Activated CD4-positive, alpha-beta T cell treated with anti-CD3 and anti-CD28 coated beads for 36 hours (primary cell): ENCODE measurements at regions of chr19 and their contacts with region 1.

Region 1: DNA sequence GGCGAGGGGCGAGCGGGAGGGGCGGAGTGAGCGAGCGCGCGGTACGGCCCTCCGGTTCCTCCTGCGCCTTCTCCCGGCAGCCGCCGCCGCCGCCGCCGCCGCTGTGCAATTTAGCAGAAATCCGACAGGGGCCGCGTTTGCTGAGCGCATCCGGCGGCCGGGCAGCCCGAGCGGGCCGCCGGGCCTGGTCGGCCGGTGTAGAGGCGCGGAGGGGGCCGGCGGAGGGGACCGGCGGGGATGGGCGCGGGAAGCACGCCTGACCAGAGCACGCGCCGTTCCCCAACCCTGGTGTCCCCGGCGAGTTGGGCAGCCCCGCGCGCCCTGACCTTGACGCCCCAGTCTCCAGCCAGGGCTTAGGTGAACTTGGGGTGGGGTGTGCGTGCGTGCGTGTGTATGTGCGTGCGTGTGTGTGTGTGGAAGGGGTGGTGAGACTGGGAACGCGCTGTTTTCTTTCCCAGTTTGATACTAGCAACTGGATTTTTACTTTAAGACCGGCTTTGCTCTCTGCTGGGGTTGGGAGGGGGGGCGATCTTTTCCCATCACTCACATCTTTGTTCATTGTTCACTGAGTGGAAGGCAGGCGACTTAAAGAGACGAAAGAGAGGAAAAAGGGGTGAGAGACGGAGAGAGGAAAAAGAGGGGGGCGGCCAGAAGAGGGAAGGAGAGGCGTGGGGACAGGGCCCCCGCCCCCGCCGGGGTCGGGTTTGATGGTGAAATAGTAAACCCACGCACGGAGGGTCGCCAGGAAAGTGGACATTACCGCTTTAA is 144.3 kb upstream of the ZNF536 start:
- DNase-seq: peak; percentile 83
- ATAC-seq: peak; percentile 82
- H3K4me3 Mint-ChIP-seq: peak overlapping the region; percentile 73
- H3K27ac Mint-ChIP-seq: no peak overlapping the region
- H3K4me1 Mint-ChIP-seq: peaks cover 27% of the 10 kb centered on the region
- H3K27me3 Mint-ChIP-seq: peaks cover 64% of the 10 kb centered on the region

Region 2: DNA sequence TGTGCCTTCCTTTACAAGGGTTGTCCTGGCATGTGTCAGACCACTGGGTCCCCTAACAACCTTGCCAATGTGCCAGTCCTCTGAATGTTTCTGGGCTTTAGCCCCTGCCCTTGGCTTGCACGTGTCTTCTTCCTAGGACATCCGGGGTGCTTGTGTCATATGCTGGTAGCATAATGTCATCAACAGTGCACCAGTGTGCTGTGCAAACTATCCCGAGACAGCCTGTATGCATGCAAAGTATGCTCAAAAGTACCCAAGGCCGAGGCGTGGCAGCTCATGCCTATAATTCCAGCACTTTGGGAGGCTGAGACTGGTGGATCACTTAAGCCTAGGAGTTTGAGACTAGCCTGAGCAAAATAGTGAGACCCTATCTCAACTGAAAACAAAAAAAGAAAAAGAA is 492.0 kb before region 1 on chr19:
- CTCF ChIA-PET with region 1: interaction called, 4 read pairs
- POLR2A ChIA-PET with region 1: no interaction called
- intact Hi-C with region 1: loop called in 1 of 2 experiments (anchors 10 kb)
- DNase-seq: no peak
- ATAC-seq: no peak
- H3K4me3 Mint-ChIP-seq: no peak overlapping the region
- H3K27ac Mint-ChIP-seq: no peak overlapping the region
- H3K4me1 Mint-ChIP-seq: no peaks in the 10 kb centered on the region
- H3K27me3 Mint-ChIP-seq: peaks cover 4% of the 10 kb centered on the region

Region 3: GRCh38 chr19:30374865-30375552 is 147.2 kb after region 1 on chr19:
- CTCF ChIA-PET with region 1: no interaction called
- POLR2A ChIA-PET with region 1: no interaction called
- intact Hi-C with region 1: loop called in 1 of 2 experiments (anchors 10 kb)
- DNase-seq: no peak
- ATAC-seq: no peak
- H3K4me3 Mint-ChIP-seq: no peak overlapping the region
- H3K27ac Mint-ChIP-seq: no peak overlapping the region
- H3K4me1 Mint-ChIP-seq: peaks cover 3% of the 10 kb centered on the region
- H3K27me3 Mint-ChIP-seq: peaks cover 30% of the 10 kb centered on the region

Region 4: GRCh38 chr19:30406220-30407067 is 178.6 kb after region 1 on chr19:
- CTCF ChIA-PET with region 1: no interaction called
- POLR2A ChIA-PET with region 1: no interaction called
- intact Hi-C with region 1: loop called in 1 of 2 experiments (anchors 2 kb)
- DNase-seq: peak; percentile 15
- ATAC-seq: no peak
- H3K4me3 Mint-ChIP-seq: no peak overlapping the region
- H3K27ac Mint-ChIP-seq: no peak overlapping the region
- H3K4me1 Mint-ChIP-seq: no peaks in the 10 kb centered on the region
- H3K27me3 Mint-ChIP-seq: peaks cover 6% of the 10 kb centered on the region

Region 5: GRCh38 chr19:30649934-30650614 is 422.2 kb after region 1 on chr19:
- CTCF ChIA-PET with region 1: no interaction called
- POLR2A ChIA-PET with region 1: no interaction called
- intact Hi-C with region 1: loop called (anchors 1 to 5 kb)
- DNase-seq: peak; percentile 68
- ATAC-seq: peak; percentile 58
- H3K4me3 Mint-ChIP-seq: no peak overlapping the region
- H3K27ac Mint-ChIP-seq: no peak overlapping the region
- H3K4me1 Mint-ChIP-seq: no peaks in the 10 kb centered on the region
- H3K27me3 Mint-ChIP-seq: peaks cover 25% of the 10 kb centered on the region

Region 6: GRCh38 chr19:31349160-31349881 is 1121.5 kb after region 1 on chr19 and contains the start of gene TSHZ3:
- CTCF ChIA-PET with region 1: no interaction called
- POLR2A ChIA-PET with region 1: no interaction called
- intact Hi-C with region 1: loop called (anchors 5 kb)
- DNase-seq: peak; percentile 71
- ATAC-seq: peak; percentile 48
- H3K4me3 Mint-ChIP-seq: peak within 1 kb of the TSS; percentile 70
- H3K27ac Mint-ChIP-seq: no peak within 1 kb of the TSS
- H3K4me1 Mint-ChIP-seq: peaks cover 31% of the 10 kb centered on the region
- H3K27me3 Mint-ChIP-seq: peaks cover 50% of the 10 kb centered on the region
- total RNA-seq, gene TSHZ3: 0.85 to 1.6 TPM